CD4-positive, alpha-beta T cell (primary cell): ENCODE measurements at regions of chr17 and their contacts with region 1.

Region 1: DNA sequence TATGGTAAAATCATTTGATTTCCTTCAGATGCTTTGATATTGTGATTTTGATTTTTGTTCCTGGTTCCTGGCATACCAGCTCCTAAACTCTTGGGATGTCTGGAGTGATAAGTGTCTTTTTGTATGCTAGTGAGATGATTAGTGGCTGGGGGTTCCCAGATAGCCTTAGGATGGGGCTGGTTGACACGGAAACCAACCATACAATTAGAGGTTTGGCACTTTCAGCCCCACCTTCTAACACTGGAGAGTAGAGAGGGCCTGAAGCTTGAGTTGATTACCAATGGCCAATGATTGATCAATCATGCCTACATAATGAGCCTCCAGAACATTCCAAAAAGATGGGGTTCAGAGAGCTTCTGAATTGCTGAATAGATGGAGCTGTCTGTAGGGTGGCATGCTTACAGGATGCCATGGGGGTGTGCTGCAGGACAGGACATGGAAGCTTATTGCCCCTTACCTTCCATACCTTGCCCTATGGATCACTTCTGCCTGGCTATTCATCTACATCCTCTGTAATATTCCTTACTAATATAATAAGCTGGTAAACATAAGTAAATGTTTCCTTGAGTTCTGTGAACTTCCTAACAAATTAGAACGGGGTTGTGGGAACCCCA is 22.8 kb downstream of the RNF112 start:
- DNase-seq: no peak
- ATAC-seq: no peak
- H3K4me3 ChIP-seq: no peak overlapping the region
- H3K4me3 Mint-ChIP-seq: no peak overlapping the region
- H3K27ac ChIP-seq: no peak overlapping the region
- H3K27ac Mint-ChIP-seq: no peak overlapping the region
- H3K4me1 ChIP-seq: no peaks in the 10 kb centered on the region
- H3K4me1 Mint-ChIP-seq: no peaks in the 10 kb centered on the region
- H3K27me3 ChIP-seq: no peaks in the 10 kb centered on the region
- H3K27me3 Mint-ChIP-seq: no peaks in the 10 kb centered on the region
- CTCF ChIP-seq: no peak

Region 2: DNA sequence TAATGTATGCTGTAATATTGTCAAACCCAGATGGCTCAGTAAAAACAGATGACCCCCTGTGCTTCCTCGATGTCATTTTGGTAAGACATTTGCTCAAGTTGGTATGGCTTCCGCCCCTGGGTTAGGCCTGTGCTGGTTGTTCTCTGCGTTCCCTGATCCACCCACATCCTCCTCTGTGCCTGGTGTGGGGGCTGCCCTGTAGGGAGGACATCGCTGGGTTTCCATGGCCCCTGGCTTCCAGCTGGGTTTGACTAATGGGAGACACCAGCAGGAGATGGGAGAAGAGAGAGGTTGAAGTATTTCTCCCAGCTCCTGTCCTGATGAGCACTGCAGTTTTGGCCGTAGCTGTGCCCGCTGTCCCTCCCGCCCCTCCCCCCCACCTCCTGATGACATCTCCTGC is 42.4 kb before region 1 on chr17:
- CTCF ChIA-PET with region 1: no interaction called
- POLR2A ChIA-PET with region 1: no interaction called
- intact Hi-C with region 1: loop called in 1 of 2 experiments (anchors 5 kb)
- DNase-seq: no peak
- ATAC-seq: no peak
- H3K4me3 ChIP-seq: no peak overlapping the region
- H3K4me3 Mint-ChIP-seq: no peak overlapping the region
- H3K27ac ChIP-seq: no peak overlapping the region
- H3K27ac Mint-ChIP-seq: no peak overlapping the region
- H3K4me1 ChIP-seq: no peaks in the 10 kb centered on the region
- H3K4me1 Mint-ChIP-seq: no peaks in the 10 kb centered on the region
- H3K27me3 ChIP-seq: no peaks in the 10 kb centered on the region
- H3K27me3 Mint-ChIP-seq: no peaks in the 10 kb centered on the region
- CTCF ChIP-seq: no peak

Region 3: DNA sequence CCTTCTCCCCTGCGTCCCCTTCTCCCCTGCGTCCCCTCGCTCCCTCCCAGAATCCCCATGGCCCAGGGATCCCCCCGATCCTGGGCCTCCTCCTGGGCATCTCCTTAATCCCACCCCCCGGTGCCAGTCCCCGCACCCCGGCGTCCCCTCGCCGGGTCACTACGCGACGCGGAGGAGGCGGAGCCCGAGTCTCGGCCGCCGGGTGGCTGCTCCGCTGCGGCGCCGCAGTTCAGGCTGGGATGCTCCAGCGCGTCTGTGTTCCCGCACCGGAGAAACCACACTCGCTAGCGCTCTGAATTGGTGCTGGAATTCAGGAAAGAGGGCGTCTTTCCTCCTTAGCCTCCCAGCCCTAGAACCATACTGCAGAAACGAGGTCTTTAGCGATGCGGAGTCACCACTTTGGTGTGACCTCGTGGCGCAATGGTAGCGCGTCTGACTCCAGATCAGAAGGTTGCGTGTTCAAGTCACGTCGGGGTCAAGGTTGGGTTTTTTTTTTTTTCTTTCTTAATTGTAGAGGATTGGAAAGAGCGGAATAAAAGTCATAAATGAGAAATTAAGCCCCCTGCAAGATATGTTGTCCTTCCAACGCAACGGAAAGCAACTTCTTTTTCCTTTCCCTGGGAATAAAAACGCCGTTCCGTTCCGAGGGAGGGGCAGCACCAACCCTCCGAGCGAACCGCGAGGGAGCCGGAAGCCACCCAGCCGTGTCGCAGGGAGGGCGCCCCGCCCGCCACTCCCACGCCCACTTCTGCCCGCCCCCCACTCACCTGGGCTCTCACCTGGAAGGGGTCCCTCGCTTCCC is 74.1 kb after region 1 on chr17:
- CTCF ChIA-PET with region 1: no interaction called
- POLR2A ChIA-PET with region 1: no interaction called
- intact Hi-C with region 1: no loop called
- DNase-seq: peak; percentile 78 to 93 (median 88)
- ATAC-seq: peak; percentile 75
- H3K4me3 ChIP-seq: peak overlapping the region; percentile 80
- H3K4me3 Mint-ChIP-seq: peak overlapping the region; percentile 95
- H3K27ac ChIP-seq: peak overlapping the region; percentile 26 to 53
- H3K27ac Mint-ChIP-seq: peak overlapping the region; percentile 97
- H3K4me1 ChIP-seq: peaks cover 14% of the 10 kb centered on the region
- H3K4me1 Mint-ChIP-seq: peaks cover 10% of the 10 kb centered on the region
- H3K27me3 ChIP-seq: no peaks in the 10 kb centered on the region
- H3K27me3 Mint-ChIP-seq: peaks cover 11% of the 10 kb centered on the region
- CTCF ChIP-seq: no peak